ENCODE measurements at regions of chr3 and their contacts with region 1.

Region 1: DNA sequence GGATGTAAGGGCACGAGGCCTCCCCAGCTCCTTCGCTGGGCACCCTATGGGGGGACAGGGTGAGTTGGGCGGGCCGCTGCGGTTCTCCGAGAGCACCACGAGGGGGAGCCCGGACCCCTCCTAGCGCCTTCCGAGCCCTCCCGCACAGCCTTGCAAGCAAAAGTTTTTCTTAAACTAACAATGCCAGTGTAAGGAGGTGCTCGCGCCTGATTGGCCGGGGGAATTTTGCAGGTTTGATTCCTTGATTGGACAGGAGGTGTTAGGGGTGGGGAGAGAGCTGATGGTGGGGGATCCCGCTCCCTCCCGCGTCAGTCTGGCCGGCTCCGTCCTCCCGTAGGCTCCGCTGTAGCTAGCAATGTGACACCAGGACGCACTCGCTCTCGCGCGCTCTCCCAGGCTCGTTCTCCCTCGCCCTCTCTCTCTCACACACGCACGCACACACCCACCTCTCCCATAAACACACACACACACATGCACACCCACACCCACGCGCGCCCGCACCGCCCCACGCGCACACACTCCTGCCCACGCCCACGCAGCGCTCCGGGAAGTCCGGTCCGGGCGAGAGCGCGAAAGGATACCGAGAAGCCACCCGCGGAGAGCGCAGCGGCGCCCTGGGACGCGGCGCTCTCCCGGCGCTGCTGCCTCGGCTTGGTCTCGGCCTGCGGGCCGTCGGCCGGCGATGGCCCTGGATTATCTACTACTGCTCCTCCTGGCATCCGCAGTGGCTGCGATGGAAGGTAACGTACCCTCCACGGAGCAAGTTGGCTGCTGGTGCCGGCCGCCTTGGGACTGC is at the start of gene EPHB1:
- DNase-seq: peak; percentile 70
- ATAC-seq: peak; percentile 94
- H3K4me3 ChIP-seq: peak within 1 kb of the TSS in 2 of 3 experiments; percentile 6 to 57; a peak in 3 of 6 replicates
- H3K27ac ChIP-seq: no peak within 1 kb of the TSS
- H3K4me1 ChIP-seq: 0 out of 2 replicates have a peak, but pooled peaks cover 6% of the 10 kb centered on the region
- H3K27me3 ChIP-seq: peaks cover 1 to 32% of the 10 kb centered on the region in 2 experiments; a peak in 4 of 5 replicates
- CTCF ChIP-seq: peak; percentile 89
- EP300 ChIP-seq: no peak
- POLR2A ChIP-seq: no peak
- RAD21 ChIP-seq: peak; percentile 88
- total RNA-seq, gene EPHB1: 0.07 TPM in 1 of 2 replicates, not detected in the other

Region 2: GRCh38 chr3:134838599-134838998 is 43.5 kb after region 1 on chr3:
- CTCF ChIA-PET with region 1: no interaction called
- POLR2A ChIA-PET with region 1: no interaction called
- in situ Hi-C with region 1: no loop called
- intact Hi-C with region 1: loop called (anchors 2 kb)
- DNase-seq: no peak
- ATAC-seq: no peak
- H3K4me3 ChIP-seq: no peak overlapping the region
- H3K27ac ChIP-seq: no peak overlapping the region
- H3K4me1 ChIP-seq: no peaks in the 10 kb centered on the region
- H3K27me3 ChIP-seq: no peaks in the 10 kb centered on the region
- CTCF ChIP-seq: 0 out of 2 replicates have a peak, but pooled peaks have one; percentile 9
- EP300 ChIP-seq: no peak
- POLR2A ChIP-seq: no peak
- RAD21 ChIP-seq: no peak

Region 3: GRCh38 chr3:134978658-134979057 is 183.5 kb after region 1 on chr3:
- CTCF ChIA-PET with region 1: no interaction called
- POLR2A ChIA-PET with region 1: no interaction called
- in situ Hi-C with region 1: no loop called
- intact Hi-C with region 1: loop called (anchors 2 kb)
- DNase-seq: no peak
- ATAC-seq: no peak
- H3K4me3 ChIP-seq: no peak overlapping the region
- H3K27ac ChIP-seq: no peak overlapping the region
- H3K4me1 ChIP-seq: no peaks in the 10 kb centered on the region
- H3K27me3 ChIP-seq: peaks cover 0 to 1% of the 10 kb centered on the region in 2 experiments; a peak in 1 of 5 replicates
- CTCF ChIP-seq: no peak
- EP300 ChIP-seq: no peak
- POLR2A ChIP-seq: no peak
- RAD21 ChIP-seq: no peak

Region 4: GRCh38 chr3:135106445-135106844 is 311.3 kb after region 1 on chr3:
- CTCF ChIA-PET with region 1: no interaction called
- POLR2A ChIA-PET with region 1: no interaction called
- in situ Hi-C with region 1: no loop called
- intact Hi-C with region 1: no loop called
- DNase-seq: peak; percentile 30
- ATAC-seq: peak; percentile 67
- H3K4me3 ChIP-seq: no peak overlapping the region
- H3K27ac ChIP-seq: no peak overlapping the region
- H3K4me1 ChIP-seq: no peaks in the 10 kb centered on the region
- H3K27me3 ChIP-seq: no peaks in the 10 kb centered on the region
- CTCF ChIP-seq: no peak
- EP300 ChIP-seq: no peak
- POLR2A ChIP-seq: no peak
- RAD21 ChIP-seq: no peak

Region 5: DNA sequence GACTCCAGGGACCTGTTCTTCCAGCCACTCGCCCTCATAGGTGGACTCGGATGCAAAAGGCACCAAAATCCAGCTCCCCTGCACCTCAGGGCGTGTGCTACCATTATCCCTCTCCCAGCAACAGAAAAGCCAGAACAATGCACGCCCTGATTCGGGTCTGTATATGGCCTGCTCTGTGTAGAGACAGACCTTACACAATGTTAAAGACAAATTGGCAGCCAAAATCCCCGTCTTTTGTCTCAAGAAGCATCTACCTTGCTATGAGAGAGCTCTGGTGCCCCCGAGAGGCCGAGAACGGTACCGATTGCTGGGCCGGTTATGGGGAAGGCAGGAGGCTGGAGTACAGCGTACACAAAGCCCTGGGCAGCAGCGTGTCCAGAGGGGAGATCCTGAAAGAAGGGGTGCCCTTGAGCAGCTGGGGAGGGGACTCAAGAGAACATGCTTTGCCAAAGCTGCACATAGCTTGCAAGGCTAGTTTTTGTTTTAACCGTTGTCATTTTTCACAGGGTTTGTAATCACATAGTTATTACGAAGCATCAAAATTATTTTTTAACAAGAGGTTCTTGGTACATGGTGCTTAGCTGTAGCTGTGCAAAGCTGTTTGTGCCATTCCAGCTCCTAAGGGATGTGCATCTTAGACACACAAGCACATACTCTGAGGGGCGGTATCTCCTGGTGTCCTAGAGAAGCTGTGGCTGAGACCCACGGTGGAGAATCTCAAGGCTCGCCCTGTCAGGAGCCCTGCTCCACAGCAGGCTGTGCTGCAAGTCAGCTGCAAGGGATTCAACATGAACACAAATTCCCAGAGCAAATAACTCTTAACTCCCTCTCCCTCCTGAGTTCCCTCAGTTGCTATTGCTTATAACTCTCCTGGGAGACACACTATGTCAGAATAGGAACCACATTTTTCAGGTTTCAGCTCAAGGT is 708.9 kb after region 1 on chr3:
- CTCF ChIA-PET with region 1: interaction called, 9 read pairs
- POLR2A ChIA-PET with region 1: no interaction called
- in situ Hi-C with region 1: loop called (anchors 10 kb)
- intact Hi-C with region 1: no loop called
- DNase-seq: peak; percentile 20
- ATAC-seq: peak; percentile 97
- H3K4me3 ChIP-seq: no peak overlapping the region
- H3K27ac ChIP-seq: no peak overlapping the region
- H3K4me1 ChIP-seq: no peaks in the 10 kb centered on the region
- H3K27me3 ChIP-seq: peaks cover 0 to 5% of the 10 kb centered on the region in 2 experiments; a peak in 1 of 5 replicates
- CTCF ChIP-seq: peak; percentile 78
- EP300 ChIP-seq: no peak
- POLR2A ChIP-seq: no peak
- RAD21 ChIP-seq: 0 out of 2 replicates have a peak, but pooled peaks have one; percentile 23

Region 6: GRCh38 chr3:135895106-135895733 is 1100.1 kb after region 1 on chr3:
- CTCF ChIA-PET with region 1: interaction called, 8 read pairs
- POLR2A ChIA-PET with region 1: no interaction called
- in situ Hi-C with region 1: loop called (anchors 10 kb)
- intact Hi-C with region 1: loop called (anchors 1 kb)
- DNase-seq: peak; percentile 49
- ATAC-seq: peak; percentile 67
- H3K4me3 ChIP-seq: no peak overlapping the region
- H3K27ac ChIP-seq: no peak overlapping the region
- H3K4me1 ChIP-seq: no peaks in the 10 kb centered on the region
- H3K27me3 ChIP-seq: no peaks in the 10 kb centered on the region; a peak in 1 of 5 replicates
- CTCF ChIP-seq: peak; percentile 83
- EP300 ChIP-seq: no peak
- POLR2A ChIP-seq: no peak
- RAD21 ChIP-seq: peak; percentile 51